ENCODE measurements at regions of chr5 and their contacts with region 1.

Region 1: GRCh38 chr5:14871210-14872069 is at the start of gene ANKH:
- DNase-seq: peak; percentile 74 to 90 (median 85)
- ATAC-seq: peak; percentile 95
- H3K4me3 ChIP-seq: peak within 1 kb of the TSS; percentile 69
- H3K4me3 Mint-ChIP-seq: peak within 1 kb of the TSS; percentile 84 to 100 (median 96)
- H3K27ac ChIP-seq: peak within 1 kb of the TSS; percentile 87
- H3K27ac Mint-ChIP-seq: peak within 1 kb of the TSS; percentile 86 to 98 (median 95)
- H3K4me1 ChIP-seq: peaks cover 6 to 12% of the 10 kb centered on the region in 2 donors
- H3K4me1 Mint-ChIP-seq: peaks cover 19 to 54% (median 39%) of the 10 kb centered on the region in 7 donors
- H3K27me3 ChIP-seq: no peaks in the 10 kb centered on the region
- H3K27me3 Mint-ChIP-seq: peaks cover 0 to 18% (median 0%) of the 10 kb centered on the region in 5 donors
- total RNA-seq, gene ANKH: 40.6 to 190 (median 113) TPM

Region 2: GRCh38 chr5:14142827-14143548 is 728.5 kb before region 1 on chr5 and contains the start of gene TRIO:
- CTCF ChIA-PET with region 1: no interaction called
- POLR2A ChIA-PET with region 1: no interaction called
- intact Hi-C with region 1: loop called (anchors 10 kb)
- DNase-seq: peak; percentile 59 to 87 (median 70)
- ATAC-seq: peak; percentile 76
- H3K4me3 ChIP-seq: peak within 1 kb of the TSS; percentile 65
- H3K4me3 Mint-ChIP-seq: peak within 1 kb of the TSS; percentile 78 to 91 (median 86)
- H3K27ac ChIP-seq: peak within 1 kb of the TSS; percentile 46
- H3K27ac Mint-ChIP-seq: peak within 1 kb of the TSS in 5 of 9 donors; percentile 20 to 80 (median 38)
- H3K4me1 ChIP-seq: peaks cover 6% of the 10 kb centered on the region in 2 donors
- H3K4me1 Mint-ChIP-seq: peaks cover 5 to 18% (median 14%) of the 10 kb centered on the region in 7 donors
- H3K27me3 ChIP-seq: peaks cover 3% of the 10 kb centered on the region in 2 donors
- H3K27me3 Mint-ChIP-seq: peaks cover 15 to 63% (median 35%) of the 10 kb centered on the region in 5 donors
- total RNA-seq, gene TRIO: 5.5 to 45.9 (median 8.5) TPM

Region 3: DNA sequence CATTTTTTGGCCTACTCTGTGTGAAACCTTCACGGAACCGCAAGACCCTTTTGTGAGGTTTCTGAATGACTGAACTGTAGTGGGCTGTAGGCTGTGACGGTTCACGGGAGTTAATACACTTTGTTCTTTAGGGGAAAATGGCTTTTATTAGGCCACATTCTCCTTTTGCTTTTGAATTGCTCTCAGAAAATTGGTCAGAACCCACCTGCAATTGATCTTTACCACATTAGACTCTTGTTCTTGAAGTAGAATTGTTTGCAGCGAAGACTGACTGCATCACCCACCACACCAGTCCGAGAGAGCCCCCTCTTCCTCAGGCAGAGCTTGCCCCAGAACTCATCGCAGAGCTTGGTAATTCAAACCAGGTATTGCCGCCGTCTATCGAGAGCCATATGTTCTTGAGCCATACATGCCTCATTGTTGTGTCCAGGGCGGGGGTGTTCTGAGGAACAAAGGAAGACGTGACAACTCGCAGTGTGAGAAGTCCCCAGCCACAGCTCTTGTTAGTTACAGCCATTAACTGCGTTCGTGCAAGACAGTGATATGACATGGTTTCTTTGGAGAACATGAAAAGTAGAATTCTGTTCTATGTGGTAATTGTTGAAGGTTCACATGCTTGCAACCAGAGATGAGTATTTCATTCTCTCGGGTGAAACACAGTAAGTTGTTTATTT is 456.3 kb before region 1 on chr5:
- CTCF ChIA-PET with region 1: no interaction called
- POLR2A ChIA-PET with region 1: no interaction called
- intact Hi-C with region 1: loop called in 1 of 2 experiments (anchors 5 kb)
- DNase-seq: no peak
- ATAC-seq: no peak
- H3K4me3 ChIP-seq: peak overlapping the region; percentile 17
- H3K4me3 Mint-ChIP-seq: peak overlapping the region in 7 of 10 donors; percentile 57 to 87 (median 73)
- H3K27ac ChIP-seq: no peak overlapping the region
- H3K27ac Mint-ChIP-seq: peak overlapping the region; percentile 89 to 97 (median 94)
- H3K4me1 ChIP-seq: peaks cover 31 to 32% of the 10 kb centered on the region in 2 donors
- H3K4me1 Mint-ChIP-seq: peaks cover 26 to 52% (median 40%) of the 10 kb centered on the region in 7 donors
- H3K27me3 ChIP-seq: no peaks in the 10 kb centered on the region
- H3K27me3 Mint-ChIP-seq: no peaks in the 10 kb centered on the region

Region 4: DNA sequence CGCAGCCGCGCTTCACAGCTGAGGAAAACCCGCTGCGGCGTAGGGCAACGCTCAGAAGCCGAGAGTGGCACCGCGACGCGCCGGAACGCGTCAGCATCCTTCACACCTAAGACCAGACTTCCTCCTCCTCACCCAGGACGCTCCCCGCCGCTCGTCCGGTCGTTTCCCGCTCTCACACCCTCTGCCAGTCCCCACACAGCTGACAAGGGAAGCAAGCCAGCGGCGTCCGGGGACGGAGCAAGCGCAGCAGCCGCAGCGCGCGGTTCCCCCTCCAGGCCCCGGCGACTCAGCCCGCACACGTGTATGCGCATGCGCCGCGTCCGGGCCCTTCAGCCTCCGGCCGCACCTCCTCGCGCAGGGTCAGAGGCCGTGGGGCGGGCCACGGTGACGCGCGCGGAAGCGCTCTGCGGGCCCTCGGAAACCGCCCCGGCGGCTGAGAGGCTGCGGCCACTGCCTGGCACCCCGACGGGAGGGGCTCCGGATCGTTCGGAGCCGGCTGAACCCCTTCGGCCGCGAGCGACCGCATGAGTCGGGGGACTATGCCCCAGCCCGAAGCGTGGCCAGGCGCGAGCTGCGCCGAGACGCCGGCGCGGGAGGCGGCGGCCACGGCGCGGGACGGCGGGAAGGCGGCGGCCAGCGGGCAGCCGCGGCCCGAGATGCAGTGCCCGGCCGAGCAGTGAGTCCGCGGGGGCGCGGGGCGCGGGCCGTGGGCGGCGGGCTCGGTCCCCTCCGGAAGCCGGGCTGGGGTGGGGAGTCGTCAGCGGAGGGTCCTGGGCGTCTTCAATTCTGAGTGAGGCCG is 206.9 kb before region 1 on chr5 and contains the start of gene OTULIN:
- CTCF ChIA-PET with region 1: no interaction called
- POLR2A ChIA-PET with region 1: interaction called, 5 read pairs
- intact Hi-C with region 1: loop called (anchors 1 kb)
- DNase-seq: peak; percentile 73 to 92 (median 75)
- ATAC-seq: peak; percentile 85
- H3K4me3 ChIP-seq: peak within 1 kb of the TSS; percentile 86
- H3K4me3 Mint-ChIP-seq: peak within 1 kb of the TSS; percentile 87 to 97 (median 96)
- H3K27ac ChIP-seq: peak within 1 kb of the TSS; percentile 79
- H3K27ac Mint-ChIP-seq: peak within 1 kb of the TSS; percentile 89 to 98 (median 96)
- H3K4me1 ChIP-seq: peaks cover 25 to 38% of the 10 kb centered on the region in 2 donors
- H3K4me1 Mint-ChIP-seq: peaks cover 30 to 73% (median 67%) of the 10 kb centered on the region in 7 donors
- H3K27me3 ChIP-seq: no peaks in the 10 kb centered on the region
- H3K27me3 Mint-ChIP-seq: no peaks in the 10 kb centered on the region
- total RNA-seq, gene OTULIN: 48.3 to 66.9 (median 58.2) TPM

Region 5: GRCh38 chr5:14727428-14727865 is 144.0 kb before region 1 on chr5:
- CTCF ChIA-PET with region 1: interaction called, 9 read pairs
- POLR2A ChIA-PET with region 1: interaction called, 3 read pairs
- intact Hi-C with region 1: loop called (anchors 1 kb)
- DNase-seq: peak; percentile 47 to 79 (median 69)
- ATAC-seq: peak; percentile 77
- H3K4me3 ChIP-seq: no peak overlapping the region
- H3K4me3 Mint-ChIP-seq: no peak overlapping the region
- H3K27ac ChIP-seq: no peak overlapping the region
- H3K27ac Mint-ChIP-seq: peak overlapping the region in 5 of 9 donors; percentile 5 to 49 (median 42)
- H3K4me1 ChIP-seq: peaks cover 0 to 4% of the 10 kb centered on the region in 2 donors
- H3K4me1 Mint-ChIP-seq: peaks cover 8 to 22% (median 16%) of the 10 kb centered on the region in 7 donors
- H3K27me3 ChIP-seq: no peaks in the 10 kb centered on the region
- H3K27me3 Mint-ChIP-seq: no peaks in the 10 kb centered on the region

Region 6: DNA sequence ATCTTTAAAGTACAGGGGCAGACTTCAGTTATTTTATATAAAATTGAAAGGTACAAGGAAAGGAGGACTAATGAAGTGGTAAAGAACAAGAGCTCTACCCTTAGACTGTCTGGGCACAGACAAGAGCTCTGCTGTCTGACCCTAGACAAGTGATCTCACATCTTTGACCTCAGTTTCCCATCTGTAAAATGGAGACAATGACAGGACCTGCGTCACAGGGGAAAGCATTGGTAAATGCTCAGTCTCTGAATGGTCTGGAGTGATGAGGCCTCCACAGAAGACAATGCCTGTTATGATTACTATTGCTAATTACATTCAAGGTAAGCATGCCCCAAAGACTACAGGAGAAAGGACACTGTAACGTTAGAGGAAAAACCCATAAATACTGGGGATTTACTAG is 37.4 kb before region 1 on chr5:
- CTCF ChIA-PET with region 1: no interaction called
- POLR2A ChIA-PET with region 1: no interaction called
- intact Hi-C with region 1: no loop called
- DNase-seq: no peak
- ATAC-seq: no peak
- H3K4me3 ChIP-seq: no peak overlapping the region
- H3K4me3 Mint-ChIP-seq: no peak overlapping the region
- H3K27ac ChIP-seq: no peak overlapping the region
- H3K27ac Mint-ChIP-seq: no peak overlapping the region
- H3K4me1 ChIP-seq: no peaks in the 10 kb centered on the region
- H3K4me1 Mint-ChIP-seq: peaks cover 0 to 77% (median 59%) of the 10 kb centered on the region in 7 donors
- H3K27me3 ChIP-seq: no peaks in the 10 kb centered on the region
- H3K27me3 Mint-ChIP-seq: no peaks in the 10 kb centered on the region

Region 7: GRCh38 chr5:14946815-14947640 is 75.6 kb after region 1 on chr5:
- CTCF ChIA-PET with region 1: no interaction called
- POLR2A ChIA-PET with region 1: no interaction called
- intact Hi-C with region 1: loop called in 1 of 2 experiments (anchors 5 kb)
- DNase-seq: peak in 7 of 9 donors; percentile 34 to 66 (median 56)
- ATAC-seq: peak; percentile 92
- H3K4me3 ChIP-seq: no peak overlapping the region
- H3K4me3 Mint-ChIP-seq: no peak overlapping the region
- H3K27ac ChIP-seq: no peak overlapping the region
- H3K27ac Mint-ChIP-seq: no peak overlapping the region
- H3K4me1 ChIP-seq: no peaks in the 10 kb centered on the region
- H3K4me1 Mint-ChIP-seq: peaks cover 0 to 9% (median 5%) of the 10 kb centered on the region in 7 donors
- H3K27me3 ChIP-seq: no peaks in the 10 kb centered on the region
- H3K27me3 Mint-ChIP-seq: peaks cover 0 to 5% (median 4%) of the 10 kb centered on the region in 5 donors

Region 8: GRCh38 chr5:14958196-14958595 is 86.8 kb after region 1 on chr5:
- CTCF ChIA-PET with region 1: no interaction called
- POLR2A ChIA-PET with region 1: no interaction called
- intact Hi-C with region 1: no loop called
- DNase-seq: no peak
- ATAC-seq: no peak
- H3K4me3 ChIP-seq: no peak overlapping the region
- H3K4me3 Mint-ChIP-seq: no peak overlapping the region
- H3K27ac ChIP-seq: no peak overlapping the region
- H3K27ac Mint-ChIP-seq: no peak overlapping the region
- H3K4me1 ChIP-seq: no peaks in the 10 kb centered on the region
- H3K4me1 Mint-ChIP-seq: peaks cover 0 to 5% (median 0%) of the 10 kb centered on the region in 7 donors
- H3K27me3 ChIP-seq: no peaks in the 10 kb centered on the region
- H3K27me3 Mint-ChIP-seq: peaks cover 0 to 10% (median 0%) of the 10 kb centered on the region in 5 donors

Region 9: DNA sequence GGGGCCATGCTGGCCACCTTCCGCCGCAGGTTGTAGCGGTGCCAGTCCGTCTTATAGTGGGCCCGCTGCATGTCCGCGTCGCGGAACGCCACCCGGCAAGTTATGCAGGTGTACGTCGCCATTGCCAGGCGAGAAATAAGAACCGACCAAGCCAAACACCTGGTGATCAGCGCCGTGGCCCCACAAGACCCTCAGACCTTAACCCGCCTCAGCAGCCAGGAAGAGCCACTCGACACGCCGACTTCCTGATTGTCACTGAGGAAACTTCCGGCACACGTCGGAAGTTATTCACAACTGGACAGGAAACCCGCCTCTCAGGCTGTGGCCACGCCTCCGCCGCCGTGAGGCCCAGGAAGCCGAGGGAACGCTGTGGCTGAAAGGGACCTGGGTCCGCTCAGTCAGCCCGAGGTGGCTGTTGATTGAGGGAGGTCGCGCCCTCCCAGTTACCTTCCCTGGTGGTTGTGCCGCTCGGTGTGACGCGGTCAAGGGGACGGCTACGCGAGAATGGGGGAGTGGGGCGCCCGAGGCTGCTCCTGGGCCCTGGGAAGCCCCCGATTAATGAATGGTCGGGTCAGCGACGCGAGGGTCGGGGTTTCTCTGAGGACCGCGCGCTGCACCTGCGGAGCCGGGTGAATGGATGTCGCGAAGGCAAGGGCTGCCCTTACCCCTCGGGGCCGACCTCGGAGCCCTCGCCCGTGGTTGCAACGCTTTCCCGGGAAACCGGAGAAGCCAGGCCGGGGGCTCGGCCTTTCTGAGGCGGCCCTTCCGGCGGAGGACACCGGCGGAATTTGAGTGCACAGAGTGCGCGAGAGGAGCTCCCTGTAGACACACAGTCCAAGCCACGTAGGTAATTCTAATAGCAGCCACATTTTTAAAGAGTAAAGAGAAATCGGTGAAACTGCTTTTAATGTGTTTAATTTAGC is 1594.4 kb after region 1 on chr5 and contains the start of gene ZNF622:
- CTCF ChIA-PET with region 1: no interaction called
- POLR2A ChIA-PET with region 1: no interaction called
- intact Hi-C with region 1: loop called (anchors 5 kb)
- DNase-seq: peak; percentile 72 to 89 (median 86)
- ATAC-seq: peak; percentile 96
- H3K4me3 ChIP-seq: peak within 1 kb of the TSS; percentile 88
- H3K4me3 Mint-ChIP-seq: peak within 1 kb of the TSS; percentile 90 to 100 (median 97)
- H3K27ac ChIP-seq: peak within 1 kb of the TSS; percentile 87
- H3K27ac Mint-ChIP-seq: peak within 1 kb of the TSS; percentile 94 to 99 (median 97)
- H3K4me1 ChIP-seq: peaks cover 44 to 55% of the 10 kb centered on the region in 2 donors
- H3K4me1 Mint-ChIP-seq: peaks cover 61 to 98% (median 82%) of the 10 kb centered on the region in 7 donors
- H3K27me3 ChIP-seq: no peaks in the 10 kb centered on the region
- H3K27me3 Mint-ChIP-seq: no peaks in the 10 kb centered on the region
- total RNA-seq, gene ZNF622: 31.8 to 40.7 (median 36.0) TPM